Naive thymus-derived CD4-positive, alpha-beta T cell (primary cell): ENCODE measurements at regions of chr11 and their contacts with region 1.

Region 1: DNA sequence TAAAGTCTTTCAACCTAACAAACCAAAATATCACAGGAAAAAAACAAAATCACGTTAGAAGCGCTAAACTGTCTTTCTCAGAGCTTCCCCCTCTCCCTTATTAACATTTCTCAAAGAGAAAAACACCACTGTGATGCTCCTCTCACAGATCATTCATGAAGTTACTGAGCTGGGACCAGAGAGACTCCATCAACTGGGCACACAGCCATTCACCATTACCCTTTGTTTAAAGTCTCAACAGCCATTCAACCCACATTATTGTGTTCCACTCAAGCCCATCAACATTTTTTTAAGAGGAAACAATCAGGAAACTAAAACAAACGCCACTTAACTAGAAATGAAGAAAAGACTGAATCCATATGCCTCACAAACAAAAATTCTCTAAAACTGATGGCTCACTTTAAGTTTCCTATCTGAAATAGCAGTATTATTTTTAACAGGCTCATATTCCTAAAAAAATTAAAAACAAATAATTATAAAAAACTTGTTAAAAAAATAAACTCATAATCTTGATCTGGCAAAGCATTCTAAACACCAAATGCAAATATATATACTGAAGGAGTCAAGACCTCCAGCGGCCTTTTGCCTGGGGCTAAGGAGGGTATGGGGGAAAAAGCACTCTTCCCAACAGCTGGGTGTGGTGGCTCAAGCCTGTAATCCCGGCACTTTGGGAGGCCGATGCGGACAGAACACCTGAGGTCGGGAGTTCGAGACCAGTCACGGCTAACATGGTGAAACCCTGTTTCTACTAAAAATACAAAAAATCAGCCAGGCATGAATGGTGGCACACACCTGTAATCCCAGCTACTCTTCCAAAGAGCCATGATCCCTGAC is 14.0 kb downstream of the CELF1 start:
- DNase-seq: no peak
- ATAC-seq: no peak
- H3K4me3 ChIP-seq: no peak overlapping the region
- H3K4me3 Mint-ChIP-seq: peak overlapping the region in 7 of 10 donors; percentile 6 to 77 (median 40)
- H3K27ac ChIP-seq: no peak overlapping the region
- H3K27ac Mint-ChIP-seq: peak overlapping the region in 8 of 9 donors; percentile 40 to 78 (median 54)
- H3K4me1 ChIP-seq: peaks cover 19 to 32% of the 10 kb centered on the region in 2 donors
- H3K4me1 Mint-ChIP-seq: peaks cover 33 to 88% (median 71%) of the 10 kb centered on the region in 7 donors
- H3K27me3 ChIP-seq: no peaks in the 10 kb centered on the region
- H3K27me3 Mint-ChIP-seq: no peaks in the 10 kb centered on the region

Region 2: DNA sequence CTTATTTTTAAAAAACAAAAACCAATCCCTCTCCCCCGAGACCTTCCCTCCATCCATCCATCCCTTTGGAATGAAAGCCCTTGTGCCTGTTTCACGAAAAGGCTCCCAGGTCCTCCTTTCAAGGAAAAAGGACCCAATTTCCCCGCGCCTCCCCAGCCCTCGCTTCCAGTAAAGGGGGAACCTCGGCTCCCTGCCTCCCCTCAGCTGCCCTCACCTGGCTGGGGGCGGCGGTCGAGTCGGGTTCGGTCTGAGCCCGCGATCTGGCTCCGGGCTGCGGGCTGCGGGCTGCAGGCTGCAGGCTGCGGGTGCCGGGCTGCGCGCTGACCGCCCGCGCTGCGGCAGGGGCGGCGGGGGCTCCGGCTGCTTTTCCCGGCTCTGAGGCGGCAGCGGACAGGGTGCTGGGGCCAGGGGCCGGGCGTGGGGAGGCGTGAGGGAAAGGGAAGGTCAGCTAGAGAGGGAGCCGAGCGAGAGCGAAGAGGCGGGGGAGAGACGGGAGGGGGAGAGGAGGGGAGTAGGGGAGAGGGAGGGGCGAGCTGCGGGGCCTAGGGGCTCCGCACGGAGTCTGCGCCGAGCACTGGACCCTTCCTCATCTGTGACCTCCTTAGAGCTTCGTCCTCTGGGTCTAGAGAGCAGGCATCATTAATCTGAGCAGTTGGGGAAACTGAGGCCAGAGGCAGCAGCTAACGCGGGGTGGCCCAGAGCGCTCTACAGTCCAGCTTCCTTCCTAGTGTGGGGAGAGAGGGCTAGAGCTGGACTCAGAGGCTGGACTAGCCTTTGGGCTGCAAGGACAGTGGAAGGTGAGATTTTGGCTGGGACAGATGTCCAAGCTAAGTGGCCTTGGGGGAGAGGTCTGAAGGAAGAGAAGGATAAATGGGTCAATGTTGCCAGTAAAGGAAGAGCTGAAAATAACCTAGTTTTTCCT is 55.2 kb after region 1 on chr11 and contains the start of gene C1QTNF4:
- CTCF ChIA-PET with region 1: no interaction called
- POLR2A ChIA-PET with region 1: no interaction called
- intact Hi-C with region 1: loop called in 1 of 2 experiments (anchors 10 kb)
- DNase-seq: no peak
- ATAC-seq: no peak
- H3K4me3 ChIP-seq: no peak within 1 kb of the TSS
- H3K4me3 Mint-ChIP-seq: peak within 1 kb of the TSS in 6 of 10 donors; percentile 5 to 67 (median 37)
- H3K27ac ChIP-seq: no peak within 1 kb of the TSS
- H3K27ac Mint-ChIP-seq: no peak within 1 kb of the TSS
- H3K4me1 ChIP-seq: peaks cover 0 to 6% of the 10 kb centered on the region in 2 donors
- H3K4me1 Mint-ChIP-seq: peaks cover 0 to 14% (median 9%) of the 10 kb centered on the region in 7 donors
- H3K27me3 ChIP-seq: peaks cover 6 to 25% of the 10 kb centered on the region in 2 donors
- H3K27me3 Mint-ChIP-seq: peaks cover 36 to 38% (median 36%) of the 10 kb centered on the region in 5 donors
- total RNA-seq, gene C1QTNF4: 0.36 to 2.3 (median 1.0) TPM